GM12878 (cell line): ENCODE measurements at regions of chr6 and their contacts with region 1.

Region 1: GRCh38 chr6:137233911-137234863 is 15.0 kb upstream of the IFNGR1 start:
- DNase-seq: no peak
- ATAC-seq: peak; percentile 79
- H3K4me3 ChIP-seq: peak overlapping the region; percentile 28; the same call in 1 of the 2 replicates
- H3K27ac ChIP-seq: peak overlapping the region; percentile 76
- H3K4me1 ChIP-seq: peaks cover 52% of the 10 kb centered on the region
- H3K27me3 ChIP-seq: no peaks in the 10 kb centered on the region
- CTCF ChIP-seq: no peak
- EP300 ChIP-seq: peak in 1 of 2 experiments; percentile 60; a peak in 1 of 4 replicates
- POLR2A ChIP-seq: no peak
- RAD21 ChIP-seq: no peak

Region 2: DNA sequence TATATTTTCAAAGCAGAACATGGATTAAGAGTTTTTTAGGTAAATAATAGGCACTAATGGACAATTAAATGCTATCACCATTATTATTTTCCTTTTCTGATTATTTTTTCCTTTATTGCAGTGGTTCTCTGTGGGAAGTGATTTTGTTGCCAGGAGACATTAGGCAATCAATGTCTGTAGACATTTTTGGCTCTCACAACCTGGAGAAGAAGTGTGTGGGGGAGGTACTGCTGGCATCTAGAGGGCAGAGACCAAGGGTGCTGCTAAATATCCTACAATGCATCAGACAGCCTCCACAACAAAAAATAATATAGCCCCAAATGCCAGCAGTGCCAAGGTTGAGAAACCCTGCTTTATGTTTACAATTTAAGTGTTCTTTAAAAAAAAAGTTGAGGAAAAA is 23.3 kb before region 1 on chr6:
- CTCF ChIA-PET with region 1: interaction called, 11 read pairs
- POLR2A ChIA-PET with region 1: interaction called, 37 read pairs
- RAD21 ChIA-PET with region 1: interaction called, 44 read pairs
- SMC1A ChIA-PET with region 1: interaction called, 77 read pairs
- in situ Hi-C with region 1: no loop called
- intact Hi-C with region 1: no loop called
- DNase-seq: no peak
- ATAC-seq: no peak
- H3K4me3 ChIP-seq: no peak overlapping the region
- H3K27ac ChIP-seq: no peak overlapping the region
- H3K4me1 ChIP-seq: peaks cover 9% of the 10 kb centered on the region; the same call in 1 of the 2 replicates
- H3K27me3 ChIP-seq: no peaks in the 10 kb centered on the region
- CTCF ChIP-seq: no peak
- EP300 ChIP-seq: no peak
- POLR2A ChIP-seq: no peak
- RAD21 ChIP-seq: no peak

Region 3: DNA sequence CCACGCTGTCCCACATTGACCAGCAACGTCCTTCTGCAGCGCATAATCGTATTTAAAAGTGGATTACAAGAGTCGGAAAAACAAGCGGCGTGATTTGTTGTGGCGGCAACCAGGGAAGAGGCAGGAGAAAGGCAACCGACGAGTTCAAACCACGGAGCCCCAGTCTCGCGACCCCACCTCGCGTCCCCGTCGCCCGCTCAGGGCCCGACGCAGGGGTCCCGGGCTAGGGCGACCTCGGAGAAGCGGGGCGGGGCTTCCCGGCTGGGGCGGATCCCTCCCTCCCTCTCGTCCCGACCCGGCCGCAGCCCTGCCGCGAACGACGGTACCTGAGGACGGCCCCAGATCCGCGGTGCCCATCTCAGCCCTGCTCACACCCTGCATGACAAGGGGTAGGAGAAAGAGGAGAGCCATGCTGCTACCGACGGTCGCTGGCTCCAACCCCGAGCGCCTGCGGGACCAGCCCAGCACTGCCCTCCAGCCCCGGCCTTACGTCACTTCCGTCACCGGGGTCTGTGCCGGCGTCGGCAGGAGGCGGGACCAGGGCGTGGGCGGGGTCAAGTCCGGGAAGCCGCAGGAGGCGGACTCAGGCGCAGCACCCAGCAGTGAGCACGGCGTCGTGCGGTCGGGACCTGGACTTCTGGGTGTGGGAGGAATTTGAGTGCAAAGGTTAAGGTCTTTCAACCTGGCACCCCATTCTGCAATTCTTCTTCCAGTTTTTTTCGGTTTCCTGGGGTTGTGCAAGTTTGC is 15.1 kb before region 1 on chr6 and contains the start of gene IFNGR1:
- CTCF ChIA-PET with region 1: interaction called, 11 read pairs
- POLR2A ChIA-PET with region 1: interaction called, 37 read pairs
- RAD21 ChIA-PET with region 1: interaction called, 44 read pairs
- SMC1A ChIA-PET with region 1: interaction called, 77 read pairs
- in situ Hi-C with region 1: no loop called
- intact Hi-C with region 1: no loop called
- DNase-seq: peak; percentile 81
- ATAC-seq: peak; percentile 79
- H3K4me3 ChIP-seq: peak within 1 kb of the TSS; percentile 91
- H3K27ac ChIP-seq: peak within 1 kb of the TSS; percentile 94
- H3K4me1 ChIP-seq: peaks cover 15% of the 10 kb centered on the region
- H3K27me3 ChIP-seq: no peaks in the 10 kb centered on the region
- CTCF ChIP-seq: no peak
- EP300 ChIP-seq: no peak
- POLR2A ChIP-seq: peak; percentile 94
- RAD21 ChIP-seq: no peak
- polyA plus RNA-seq, gene IFNGR1: 182 to 296 TPM